CD8-positive, alpha-beta memory T cell (primary cell): ENCODE measurements at regions of chr9 and their contacts with region 1.

Region 1: DNA sequence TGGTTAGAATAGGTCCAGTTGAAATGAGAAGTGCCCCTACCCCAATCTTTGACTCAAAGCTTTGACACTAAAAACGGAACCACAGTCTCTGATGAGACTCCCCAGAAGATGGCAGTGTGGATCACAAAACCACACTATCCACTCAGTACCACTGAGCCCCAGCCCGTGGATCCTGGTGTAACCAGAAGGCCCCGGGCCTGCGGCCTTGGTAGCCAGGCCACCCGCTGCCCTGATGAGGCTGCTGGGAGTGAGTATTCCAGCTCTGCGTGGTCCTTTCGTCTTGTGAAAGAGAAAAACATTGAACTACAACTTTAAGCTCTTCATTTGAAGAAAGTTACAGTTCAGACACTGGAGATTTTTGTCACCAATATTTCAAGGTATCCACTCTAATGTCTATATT is 42.2 kb upstream of the FBP1 start:
- DNase-seq: peak; percentile 29 to 62 (median 36)
- H3K4me3 ChIP-seq: no peak overlapping the region
- H3K4me3 Mint-ChIP-seq: no peak overlapping the region
- H3K27ac ChIP-seq: no peak overlapping the region
- H3K27ac Mint-ChIP-seq: peak overlapping the region in 1 of 8 donors; percentile 9
- H3K4me1 ChIP-seq: no peaks in the 10 kb centered on the region
- H3K4me1 Mint-ChIP-seq: no peaks in the 10 kb centered on the region
- H3K27me3 ChIP-seq: no peaks in the 10 kb centered on the region
- H3K27me3 Mint-ChIP-seq: peaks cover 7 to 22% of the 10 kb centered on the region in 2 donors

Region 2: DNA sequence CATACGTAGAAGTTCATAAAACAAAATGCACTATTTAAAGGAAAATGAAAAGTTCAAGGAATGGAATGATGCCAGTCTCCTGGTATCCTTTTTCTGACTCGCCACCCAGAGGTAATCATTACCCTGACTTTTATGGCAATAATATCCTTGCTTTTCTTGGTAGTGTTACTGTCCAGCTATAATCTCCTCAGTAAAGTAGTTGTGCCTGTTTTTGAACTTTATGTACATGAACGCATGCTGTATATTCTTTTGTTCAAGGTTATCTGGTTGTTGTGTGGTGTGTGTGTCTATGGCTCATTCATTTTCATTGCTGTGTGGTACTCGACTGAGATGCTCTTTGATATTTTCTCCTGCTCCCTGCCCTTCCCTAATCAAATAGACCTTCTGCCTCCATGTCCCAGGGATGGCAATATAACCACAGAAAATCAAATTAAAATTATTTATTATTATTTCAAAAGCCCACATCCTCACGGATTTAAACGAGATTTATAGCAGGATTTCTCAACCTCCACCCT is 13.0 kb before region 1 on chr9:
- CTCF ChIA-PET with region 1: interaction called, 21 read pairs
- POLR2A ChIA-PET with region 1: no interaction called
- DNase-seq: no peak
- H3K4me3 ChIP-seq: no peak overlapping the region
- H3K4me3 Mint-ChIP-seq: peak overlapping the region in 6 of 7 donors; percentile 87 to 98 (median 94)
- H3K27ac ChIP-seq: no peak overlapping the region
- H3K27ac Mint-ChIP-seq: peak overlapping the region in 1 of 8 donors; percentile 78
- H3K4me1 ChIP-seq: no peaks in the 10 kb centered on the region
- H3K4me1 Mint-ChIP-seq: peaks cover 5 to 15% (median 6%) of the 10 kb centered on the region in 3 donors
- H3K27me3 ChIP-seq: no peaks in the 10 kb centered on the region
- H3K27me3 Mint-ChIP-seq: peaks cover 3 to 27% of the 10 kb centered on the region in 2 donors

Region 3: GRCh38 chr9:94917840-94918753 is 236.6 kb after region 1 on chr9:
- CTCF ChIA-PET with region 1: interaction called, 19 read pairs
- POLR2A ChIA-PET with region 1: no interaction called
- DNase-seq: peak in 3 of 5 donors; percentile 5 to 49 (median 24)
- H3K4me3 ChIP-seq: no peak overlapping the region
- H3K4me3 Mint-ChIP-seq: no peak overlapping the region
- H3K27ac ChIP-seq: no peak overlapping the region
- H3K27ac Mint-ChIP-seq: peak overlapping the region in 2 of 8 donors; percentile 36 to 40
- H3K4me1 ChIP-seq: no peaks in the 10 kb centered on the region
- H3K4me1 Mint-ChIP-seq: no peaks in the 10 kb centered on the region
- H3K27me3 ChIP-seq: no peaks in the 10 kb centered on the region
- H3K27me3 Mint-ChIP-seq: no peaks in the 10 kb centered on the region

Region 4: GRCh38 chr9:95127249-95128176 is 446.0 kb after region 1 on chr9:
- CTCF ChIA-PET with region 1: interaction called, 102 read pairs
- POLR2A ChIA-PET with region 1: no interaction called
- DNase-seq: peak; percentile 33 to 71 (median 48)
- H3K4me3 ChIP-seq: no peak overlapping the region
- H3K4me3 Mint-ChIP-seq: no peak overlapping the region
- H3K27ac ChIP-seq: no peak overlapping the region
- H3K27ac Mint-ChIP-seq: no peak overlapping the region
- H3K4me1 ChIP-seq: no peaks in the 10 kb centered on the region
- H3K4me1 Mint-ChIP-seq: peaks cover 3 to 9% (median 3%) of the 10 kb centered on the region in 3 donors
- H3K27me3 ChIP-seq: no peaks in the 10 kb centered on the region
- H3K27me3 Mint-ChIP-seq: no peaks in the 10 kb centered on the region

Region 5: DNA sequence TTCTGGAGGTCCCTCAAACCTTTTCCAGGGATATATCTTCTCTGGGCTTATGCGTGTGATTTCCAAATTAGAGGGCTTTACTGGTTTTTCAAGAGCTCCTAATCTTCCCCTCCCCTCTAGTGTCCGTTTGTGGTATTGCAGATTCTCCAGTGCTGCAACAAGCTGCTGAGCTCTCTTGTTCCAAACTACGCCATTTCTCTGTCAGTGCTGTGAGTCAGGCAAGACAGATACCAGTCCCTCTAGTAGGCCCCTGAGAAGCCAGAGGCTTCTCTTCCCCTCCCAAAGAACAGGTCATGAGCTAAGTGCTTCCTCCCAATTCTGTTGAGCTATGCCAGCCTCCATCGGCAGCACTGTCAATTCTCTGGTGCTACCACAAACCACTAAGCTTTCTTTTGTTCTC is 486.5 kb after region 1 on chr9:
- CTCF ChIA-PET with region 1: interaction called, 20 read pairs
- POLR2A ChIA-PET with region 1: no interaction called
- DNase-seq: peak; percentile 22 to 63 (median 29)
- H3K4me3 ChIP-seq: no peak overlapping the region
- H3K4me3 Mint-ChIP-seq: no peak overlapping the region
- H3K27ac ChIP-seq: no peak overlapping the region
- H3K27ac Mint-ChIP-seq: peak overlapping the region in 2 of 8 donors; percentile 15 to 67
- H3K4me1 ChIP-seq: no peaks in the 10 kb centered on the region
- H3K4me1 Mint-ChIP-seq: peaks cover 2 to 14% (median 8%) of the 10 kb centered on the region in 3 donors
- H3K27me3 ChIP-seq: no peaks in the 10 kb centered on the region
- H3K27me3 Mint-ChIP-seq: peaks cover 0 to 1% of the 10 kb centered on the region in 2 donors